Psoas muscle (tissue), 8 donors: ENCODE measurements at regions of chr6 and their contacts with region 1.

Region 1: GRCh38 chr6:82893889-82894652 is 171.6 kb downstream of the UBE3D start:
- DNase-seq: no peak
- ATAC-seq: no peak
- H3K4me3 ChIP-seq: no peak overlapping the region
- H3K27ac ChIP-seq: no peak overlapping the region
- H3K4me1 ChIP-seq: no peaks in the 10 kb centered on the region
- H3K27me3 ChIP-seq: no peaks in the 10 kb centered on the region
- CTCF ChIP-seq: no peak

Region 2: GRCh38 chr6:82842721-82843120 is 51.4 kb before region 1 on chr6:
- intact Hi-C with region 1: loop called in 1 of 2 experiments (anchors 2 kb)
- DNase-seq: no peak
- ATAC-seq: peak in 1 of 4 donors; percentile 27
- H3K4me3 ChIP-seq: no peak overlapping the region
- H3K27ac ChIP-seq: no peak overlapping the region
- H3K4me1 ChIP-seq: no peaks in the 10 kb centered on the region
- H3K27me3 ChIP-seq: no peaks in the 10 kb centered on the region
- CTCF ChIP-seq: no peak

Region 3: GRCh38 chr6:82906951-82907350 is 12.9 kb after region 1 on chr6:
- intact Hi-C with region 1: no loop called
- DNase-seq: no peak
- ATAC-seq: no peak
- H3K4me3 ChIP-seq: no peak overlapping the region
- H3K27ac ChIP-seq: no peak overlapping the region
- H3K4me1 ChIP-seq: peaks cover 20% of the 10 kb centered on the region
- H3K27me3 ChIP-seq: no peaks in the 10 kb centered on the region
- CTCF ChIP-seq: no peak